Caco-2 (cell line): ENCODE measurements at regions of chr10 and their contacts with region 1.

Region 1: DNA sequence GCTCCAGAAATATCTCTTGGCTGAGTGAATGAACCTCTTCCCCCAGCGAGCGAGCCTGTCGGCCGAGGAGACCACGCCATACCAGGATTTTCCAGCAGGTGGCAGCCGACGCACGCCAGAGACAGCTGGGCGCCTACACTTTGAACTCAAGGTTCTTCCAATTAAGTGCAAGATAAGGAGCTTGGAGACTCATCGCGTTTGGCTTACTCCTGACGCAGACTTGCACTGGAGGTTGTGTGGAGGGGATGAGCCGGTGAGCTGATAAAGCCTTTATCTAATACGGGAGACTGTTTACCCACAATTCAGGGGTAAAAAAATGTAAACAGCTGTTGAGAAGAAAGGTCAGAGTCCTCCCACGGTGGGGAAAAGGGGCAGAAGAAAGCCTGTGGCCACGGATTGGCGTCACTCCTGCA is 45.9 kb upstream of the EMX2 start:
- DNase-seq: peak; percentile 91
- H3K4me3 ChIP-seq: no peak overlapping the region
- H3K4me3 Mint-ChIP-seq: peak overlapping the region; percentile 59
- H3K27ac Mint-ChIP-seq: peak overlapping the region; percentile 69
- H3K4me1 ChIP-seq: peaks cover 17% of the 10 kb centered on the region
- H3K4me1 Mint-ChIP-seq: peaks cover 11% of the 10 kb centered on the region
- H3K27me3 ChIP-seq: no peaks in the 10 kb centered on the region
- H3K27me3 Mint-ChIP-seq: no peaks in the 10 kb centered on the region
- CTCF ChIP-seq: peak; percentile 93 to 94

Region 2: GRCh38 chr10:117391436-117392205 is 105.0 kb before region 1 on chr10:
- CTCF ChIA-PET with region 1: no interaction called
- POLR2A ChIA-PET with region 1: no interaction called
- intact Hi-C with region 1: no loop called
- DNase-seq: no peak
- H3K4me3 ChIP-seq: no peak overlapping the region
- H3K4me3 Mint-ChIP-seq: no peak overlapping the region
- H3K27ac Mint-ChIP-seq: no peak overlapping the region
- H3K4me1 ChIP-seq: no peaks in the 10 kb centered on the region
- H3K4me1 Mint-ChIP-seq: peaks cover 15% of the 10 kb centered on the region
- H3K27me3 ChIP-seq: no peaks in the 10 kb centered on the region
- H3K27me3 Mint-ChIP-seq: no peaks in the 10 kb centered on the region
- CTCF ChIP-seq: no peak

Region 3: DNA sequence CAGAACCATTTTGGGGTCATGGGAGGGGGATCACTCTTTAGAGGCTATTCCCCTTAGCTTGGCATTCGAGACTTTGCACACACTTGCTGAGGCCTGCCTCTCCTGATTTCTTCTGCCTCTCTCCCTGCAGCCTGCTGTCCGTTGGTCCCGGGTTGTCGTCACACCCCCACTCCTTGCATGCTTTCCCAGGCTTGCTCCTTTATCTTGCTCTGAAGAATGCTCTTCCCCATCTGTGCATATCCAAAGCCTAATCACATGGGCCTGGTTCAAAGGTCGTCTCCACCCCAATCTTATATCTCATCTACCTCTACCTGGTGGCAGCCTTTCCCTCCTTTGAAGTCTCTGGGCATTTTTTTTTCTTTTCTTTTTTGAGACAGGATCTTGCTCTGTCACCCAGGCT is 21.6 kb after region 1 on chr10:
- CTCF ChIA-PET with region 1: interaction called, 4 read pairs
- POLR2A ChIA-PET with region 1: no interaction called
- intact Hi-C with region 1: loop called (anchors 1 kb)
- DNase-seq: peak; percentile 88 to 93
- H3K4me3 ChIP-seq: no peak overlapping the region
- H3K4me3 Mint-ChIP-seq: peak overlapping the region; percentile 49
- H3K27ac Mint-ChIP-seq: peak overlapping the region; percentile 85
- H3K4me1 ChIP-seq: peaks cover 54% of the 10 kb centered on the region
- H3K4me1 Mint-ChIP-seq: peaks cover 31% of the 10 kb centered on the region
- H3K27me3 ChIP-seq: no peaks in the 10 kb centered on the region
- H3K27me3 Mint-ChIP-seq: no peaks in the 10 kb centered on the region
- CTCF ChIP-seq: no peak

Region 4: DNA sequence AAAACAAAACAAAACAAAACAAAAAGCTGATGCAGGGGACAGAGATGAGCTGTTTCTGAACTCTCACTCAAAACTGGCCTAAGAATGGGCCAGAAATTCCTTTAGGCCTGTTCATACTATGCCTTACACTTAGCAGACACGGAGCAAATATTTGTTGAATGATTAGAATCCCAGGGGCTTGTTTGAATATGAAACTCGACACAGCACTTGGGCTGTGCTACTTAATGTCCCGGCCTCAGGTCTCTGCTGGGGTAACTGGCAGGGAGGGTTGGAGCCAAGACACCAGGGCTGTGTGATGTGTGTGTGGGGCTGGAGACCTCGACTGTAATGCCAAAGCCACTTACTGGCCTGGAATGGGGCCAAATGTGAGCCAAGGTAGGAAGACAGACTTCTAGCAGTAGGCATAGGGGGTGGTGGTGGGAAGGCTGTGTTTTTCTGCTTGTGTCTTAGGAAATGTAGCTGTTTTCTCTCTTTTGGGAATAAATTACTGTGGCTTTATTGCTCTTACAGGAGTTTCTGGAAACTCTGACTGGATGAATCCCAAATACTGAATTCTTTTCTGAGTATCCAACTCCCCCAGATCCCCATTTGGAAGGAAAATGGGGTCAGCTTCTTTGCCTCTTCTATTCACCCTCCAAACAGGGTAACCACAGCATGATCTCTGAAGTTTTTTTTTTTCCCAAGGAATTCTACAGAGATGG is 112.6 kb after region 1 on chr10:
- CTCF ChIA-PET with region 1: interaction called, 6 read pairs
- POLR2A ChIA-PET with region 1: no interaction called
- intact Hi-C with region 1: loop called (anchors 2 kb)
- DNase-seq: peak; percentile 71 to 75
- H3K4me3 ChIP-seq: no peak overlapping the region
- H3K4me3 Mint-ChIP-seq: peak overlapping the region; percentile 45
- H3K27ac Mint-ChIP-seq: peak overlapping the region; percentile 84
- H3K4me1 ChIP-seq: peaks cover 30% of the 10 kb centered on the region
- H3K4me1 Mint-ChIP-seq: peaks cover 36% of the 10 kb centered on the region
- H3K27me3 ChIP-seq: no peaks in the 10 kb centered on the region
- H3K27me3 Mint-ChIP-seq: no peaks in the 10 kb centered on the region
- CTCF ChIP-seq: no peak

Region 5: GRCh38 chr10:117631276-117632145 is 134.9 kb after region 1 on chr10:
- CTCF ChIA-PET with region 1: no interaction called
- POLR2A ChIA-PET with region 1: no interaction called
- intact Hi-C with region 1: no loop called
- DNase-seq: no peak
- H3K4me3 ChIP-seq: no peak overlapping the region
- H3K4me3 Mint-ChIP-seq: no peak overlapping the region
- H3K27ac Mint-ChIP-seq: no peak overlapping the region
- H3K4me1 ChIP-seq: no peaks in the 10 kb centered on the region
- H3K4me1 Mint-ChIP-seq: no peaks in the 10 kb centered on the region
- H3K27me3 ChIP-seq: no peaks in the 10 kb centered on the region
- H3K27me3 Mint-ChIP-seq: no peaks in the 10 kb centered on the region
- CTCF ChIP-seq: no peak

Region 6: GRCh38 chr10:117762819-117763172 is 266.2 kb after region 1 on chr10:
- CTCF ChIA-PET with region 1: no interaction called
- POLR2A ChIA-PET with region 1: no interaction called
- intact Hi-C with region 1: loop called (anchors 2 kb)
- DNase-seq: no peak
- H3K4me3 ChIP-seq: no peak overlapping the region
- H3K4me3 Mint-ChIP-seq: no peak overlapping the region
- H3K27ac Mint-ChIP-seq: no peak overlapping the region
- H3K4me1 ChIP-seq: no peaks in the 10 kb centered on the region
- H3K4me1 Mint-ChIP-seq: no peaks in the 10 kb centered on the region
- H3K27me3 ChIP-seq: no peaks in the 10 kb centered on the region; the same call in 1 of the 2 replicates
- H3K27me3 Mint-ChIP-seq: peaks cover 14% of the 10 kb centered on the region
- CTCF ChIP-seq: no peak

Region 7: DNA sequence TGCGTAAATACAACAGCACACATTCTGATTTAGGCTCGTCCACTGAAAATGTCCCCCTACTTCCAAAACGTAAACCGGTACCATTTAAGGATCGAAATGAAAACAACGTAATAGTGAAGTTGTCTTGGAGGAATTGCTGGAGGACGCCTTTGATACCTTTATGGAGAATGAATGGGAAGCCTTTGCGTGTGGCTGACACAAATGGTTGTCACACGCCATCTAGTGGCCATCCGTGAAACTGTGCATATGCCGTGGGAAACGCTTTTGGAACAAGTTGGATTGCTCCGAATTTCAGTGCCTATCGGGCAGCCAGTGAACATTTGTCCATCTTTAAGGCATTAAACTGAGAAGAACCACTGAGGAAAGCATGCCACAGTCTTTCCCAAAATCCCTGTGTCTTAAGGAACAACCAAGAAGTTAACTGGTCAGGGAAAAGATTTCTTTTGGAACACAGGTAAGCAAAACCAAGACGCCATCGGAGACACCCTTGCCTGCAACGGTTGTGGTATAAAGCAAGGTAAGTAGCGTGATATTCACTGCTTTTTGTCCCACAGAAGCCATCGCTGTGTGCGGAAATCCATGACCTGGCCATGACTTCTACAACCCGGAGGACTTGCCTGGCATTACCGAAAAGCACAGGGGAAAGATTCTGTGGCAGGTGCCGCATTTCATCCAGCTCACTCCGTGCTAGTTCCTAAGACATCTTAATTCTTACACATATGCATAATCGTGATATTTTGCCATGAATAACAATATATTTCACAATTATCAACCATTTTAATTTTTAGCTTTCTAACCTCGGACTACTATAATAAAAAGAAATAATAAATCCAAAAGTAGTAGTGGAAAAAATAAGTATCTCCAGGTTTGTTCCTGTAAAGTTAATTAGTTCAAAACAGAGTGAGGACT is 744.9 kb after region 1 on chr10:
- CTCF ChIA-PET with region 1: interaction called, 5 read pairs
- POLR2A ChIA-PET with region 1: no interaction called
- intact Hi-C with region 1: loop called (anchors 1 kb)
- DNase-seq: peak; percentile 77 to 81
- H3K4me3 ChIP-seq: no peak overlapping the region
- H3K4me3 Mint-ChIP-seq: no peak overlapping the region
- H3K27ac Mint-ChIP-seq: no peak overlapping the region
- H3K4me1 ChIP-seq: no peaks in the 10 kb centered on the region
- H3K4me1 Mint-ChIP-seq: no peaks in the 10 kb centered on the region
- H3K27me3 ChIP-seq: peaks cover 2% of the 10 kb centered on the region; the same call in 1 of the 2 replicates
- H3K27me3 Mint-ChIP-seq: peaks cover 3% of the 10 kb centered on the region
- CTCF ChIP-seq: peak; percentile 79 to 92